MCF 10A (cell line): ENCODE measurements at regions of chr2 and their contacts with region 1.

Region 1: DNA sequence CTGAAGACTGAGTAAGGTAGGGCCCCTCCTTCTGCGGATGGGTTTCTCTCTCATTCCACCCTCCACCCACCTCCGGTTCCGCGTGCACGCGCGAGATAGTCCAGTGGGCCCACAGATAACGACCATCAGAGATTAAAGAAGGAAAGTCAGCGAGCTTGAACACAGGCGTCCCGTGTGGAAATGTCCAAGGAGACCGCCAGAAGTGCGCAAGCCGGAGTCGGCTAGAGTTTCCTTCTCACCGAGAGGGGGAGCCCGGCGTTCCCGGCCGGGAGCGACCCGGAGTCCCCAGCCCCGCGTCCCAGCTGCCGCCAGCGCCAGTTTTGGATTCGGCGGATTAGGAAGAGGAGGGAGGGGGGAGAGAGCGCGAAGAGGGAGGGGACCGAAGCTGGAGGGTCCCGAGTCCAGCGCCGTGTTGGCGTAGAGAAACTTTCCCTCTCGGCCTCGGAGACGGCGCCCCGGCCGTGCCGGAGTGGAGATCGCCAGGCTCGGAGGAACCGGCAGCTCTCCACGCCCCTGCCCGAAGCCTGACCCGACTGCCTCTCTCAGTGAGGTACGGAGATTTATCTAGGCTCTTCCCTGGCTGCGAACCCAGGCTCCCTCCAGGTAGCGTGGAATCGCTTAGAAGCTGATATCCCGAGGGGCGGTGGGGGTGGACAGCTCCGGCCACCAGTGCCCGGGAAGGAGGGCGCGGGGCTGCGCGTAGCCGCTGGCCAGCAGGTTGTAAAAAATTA is at the start of gene GULP1:
- DNase-seq: peak; percentile 76
- H3K4me3 Mint-ChIP-seq: peak within 1 kb of the TSS; percentile 99
- H3K27ac Mint-ChIP-seq: peak within 1 kb of the TSS; percentile 87
- H3K4me1 Mint-ChIP-seq: peaks cover 22% of the 10 kb centered on the region
- H3K27me3 Mint-ChIP-seq: no peaks in the 10 kb centered on the region
- CTCF ChIP-seq: peak; percentile 73
- total RNA-seq, gene GULP1: 4.2 and 9.3 TPM in 2 replicates

Region 2: DNA sequence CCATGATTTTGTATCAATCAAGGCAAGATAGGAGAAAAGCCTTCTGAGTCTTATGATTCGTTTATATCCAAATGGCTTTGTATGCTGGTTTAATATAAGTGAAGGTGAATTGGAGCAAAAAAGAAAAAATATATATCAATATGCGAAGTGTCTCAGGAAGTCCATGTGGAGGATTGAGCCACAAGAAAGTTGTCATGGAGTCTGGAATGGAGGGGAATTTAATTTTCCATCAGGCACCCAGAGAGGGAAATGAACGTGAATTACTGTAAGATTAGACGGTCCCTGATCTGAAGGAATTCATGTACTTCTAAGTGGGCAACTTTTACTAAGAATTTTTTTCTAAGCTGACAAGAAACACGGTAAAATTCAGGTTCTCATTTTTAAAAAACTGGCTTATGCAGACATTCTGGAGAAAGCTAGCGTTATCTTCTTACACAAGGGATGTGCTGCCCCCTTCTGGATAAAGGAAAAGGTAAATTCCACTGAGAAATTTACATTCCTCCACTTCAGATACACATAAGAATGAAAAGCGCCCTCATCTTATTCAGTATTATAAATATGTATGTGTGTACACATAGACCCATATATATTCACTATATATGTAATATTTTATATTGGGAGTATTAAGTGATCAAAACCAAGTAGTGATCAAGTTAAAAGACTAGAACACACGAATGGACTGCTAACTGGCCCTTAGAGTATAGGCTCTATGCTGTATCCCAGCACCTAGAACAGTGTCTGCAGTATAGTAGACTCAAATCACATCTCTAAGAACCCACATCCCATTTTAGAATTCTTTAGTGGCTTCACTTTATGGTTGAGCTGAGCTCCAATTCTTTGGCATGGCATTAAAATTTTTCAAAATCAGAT is 448.6 kb before region 1 on chr2:
- CTCF ChIA-PET with region 1: interaction called, 3 read pairs
- POLR2A ChIA-PET with region 1: interaction called, 3 read pairs
- intact Hi-C with region 1: loop called (anchors 10 kb)
- DNase-seq: peak; percentile 74
- H3K4me3 Mint-ChIP-seq: no peak overlapping the region
- H3K27ac Mint-ChIP-seq: no peak overlapping the region
- H3K4me1 Mint-ChIP-seq: no peaks in the 10 kb centered on the region
- H3K27me3 Mint-ChIP-seq: no peaks in the 10 kb centered on the region
- CTCF ChIP-seq: peak; percentile 56

Region 3: DNA sequence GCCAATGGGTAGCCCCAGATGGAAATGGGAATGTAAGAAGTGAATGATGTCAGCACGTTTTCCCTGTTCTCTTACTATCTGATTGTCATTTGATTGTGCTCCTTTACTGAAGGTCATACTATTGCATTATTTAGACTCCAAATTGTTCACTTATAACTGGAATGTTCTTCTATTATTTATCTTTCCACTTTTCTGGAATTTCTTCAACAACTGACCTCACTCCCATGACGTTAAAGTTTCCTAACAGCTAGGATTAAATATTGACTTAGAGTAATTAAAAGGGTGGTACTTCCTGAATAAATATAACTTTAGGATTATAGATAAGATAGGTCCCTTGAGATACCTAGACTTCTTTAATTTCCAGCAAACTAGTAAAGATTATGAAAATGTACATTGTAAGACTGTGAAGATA is 11.0 kb before region 1 on chr2:
- CTCF ChIA-PET with region 1: interaction called, 17 read pairs
- POLR2A ChIA-PET with region 1: interaction called, 4 read pairs
- intact Hi-C with region 1: no loop called
- DNase-seq: no peak
- H3K4me3 Mint-ChIP-seq: no peak overlapping the region
- H3K27ac Mint-ChIP-seq: no peak overlapping the region
- H3K4me1 Mint-ChIP-seq: no peaks in the 10 kb centered on the region
- H3K27me3 Mint-ChIP-seq: no peaks in the 10 kb centered on the region
- CTCF ChIP-seq: no peak

Region 4: DNA sequence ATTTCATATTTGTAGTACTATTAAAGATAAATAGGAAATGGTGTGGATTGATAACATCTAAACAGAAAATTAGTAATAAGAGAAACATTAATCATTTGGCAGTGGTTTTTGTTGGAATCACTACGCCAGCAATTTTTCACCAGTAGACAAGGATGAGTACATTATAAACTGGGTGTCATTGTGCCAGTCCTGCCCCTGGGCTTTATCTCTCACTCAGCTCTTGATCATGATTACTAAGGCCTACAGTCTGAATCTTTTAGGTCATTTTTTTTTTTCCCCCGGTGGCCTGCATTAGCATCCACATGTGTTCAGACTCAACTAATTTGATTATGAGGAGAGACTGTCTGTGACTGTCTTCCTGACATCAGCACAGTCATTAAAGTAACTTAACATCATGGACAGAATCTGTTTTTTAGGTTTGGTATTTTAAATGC is 16.1 kb after region 1 on chr2:
- CTCF ChIA-PET with region 1: interaction called, 6 read pairs
- POLR2A ChIA-PET with region 1: interaction called, 10 read pairs
- intact Hi-C with region 1: no loop called
- DNase-seq: no peak
- H3K4me3 Mint-ChIP-seq: no peak overlapping the region
- H3K27ac Mint-ChIP-seq: no peak overlapping the region
- H3K4me1 Mint-ChIP-seq: peaks cover 9% of the 10 kb centered on the region
- H3K27me3 Mint-ChIP-seq: no peaks in the 10 kb centered on the region
- CTCF ChIP-seq: no peak

Region 5: DNA sequence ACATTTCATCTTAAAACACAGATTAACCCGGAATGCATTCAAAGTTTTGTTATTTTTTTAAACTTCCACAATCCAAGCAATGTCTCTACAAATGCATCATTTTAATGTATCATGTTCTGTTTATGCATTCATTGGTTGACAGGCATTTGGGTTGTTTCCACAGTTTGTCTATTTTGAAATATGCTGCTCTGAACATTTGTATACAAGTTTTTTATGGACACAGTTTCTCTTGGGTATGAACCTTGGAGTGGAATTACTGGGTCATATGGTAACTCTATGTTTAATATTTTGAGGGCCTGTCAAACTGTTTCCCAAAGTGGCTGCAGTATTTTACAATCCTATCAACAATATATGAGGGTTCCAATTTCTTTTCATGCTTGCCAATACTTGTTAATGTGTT is 57.2 kb after region 1 on chr2:
- CTCF ChIA-PET with region 1: interaction called, 10 read pairs
- POLR2A ChIA-PET with region 1: interaction called, 3 read pairs
- intact Hi-C with region 1: no loop called
- DNase-seq: no peak
- H3K4me3 Mint-ChIP-seq: no peak overlapping the region
- H3K27ac Mint-ChIP-seq: no peak overlapping the region
- H3K4me1 Mint-ChIP-seq: no peaks in the 10 kb centered on the region
- H3K27me3 Mint-ChIP-seq: no peaks in the 10 kb centered on the region
- CTCF ChIP-seq: no peak

Region 6: GRCh38 chr2:188369365-188369764 is 77.6 kb after region 1 on chr2:
- CTCF ChIA-PET with region 1: interaction called, 28 read pairs
- POLR2A ChIA-PET with region 1: interaction called, 11 read pairs
- intact Hi-C with region 1: loop called (anchors 1 kb)
- DNase-seq: peak; percentile 73
- H3K4me3 Mint-ChIP-seq: no peak overlapping the region
- H3K27ac Mint-ChIP-seq: no peak overlapping the region
- H3K4me1 Mint-ChIP-seq: no peaks in the 10 kb centered on the region
- H3K27me3 Mint-ChIP-seq: no peaks in the 10 kb centered on the region
- CTCF ChIP-seq: peak; percentile 59

Region 7: DNA sequence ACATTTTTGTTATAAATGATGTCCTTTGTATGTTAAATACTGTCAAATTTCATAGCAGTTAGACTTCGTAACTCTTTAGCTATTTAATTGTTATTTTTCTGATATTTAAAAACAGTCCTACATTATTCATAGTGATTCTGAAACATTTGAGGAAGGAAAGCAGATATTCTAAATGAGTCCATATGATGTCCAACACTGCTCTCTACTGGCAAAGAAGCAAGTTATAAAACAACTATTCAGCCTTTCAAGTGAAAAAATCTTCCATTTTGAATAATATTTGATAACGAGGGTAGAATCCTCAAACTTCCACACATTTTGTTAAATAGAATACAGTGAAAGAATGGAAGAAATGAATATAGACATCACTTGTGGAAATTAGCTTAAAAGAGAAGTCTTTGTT is 220.7 kb after region 1 on chr2:
- CTCF ChIA-PET with region 1: interaction called, 14 read pairs
- POLR2A ChIA-PET with region 1: no interaction called
- intact Hi-C with region 1: loop called (anchors 1 kb)
- DNase-seq: peak; percentile 54
- H3K4me3 Mint-ChIP-seq: no peak overlapping the region
- H3K27ac Mint-ChIP-seq: no peak overlapping the region
- H3K4me1 Mint-ChIP-seq: no peaks in the 10 kb centered on the region
- H3K27me3 Mint-ChIP-seq: no peaks in the 10 kb centered on the region
- CTCF ChIP-seq: peak; percentile 62